ENCODE measurements at regions of chr7 and their contacts with region 1.

Region 1: DNA sequence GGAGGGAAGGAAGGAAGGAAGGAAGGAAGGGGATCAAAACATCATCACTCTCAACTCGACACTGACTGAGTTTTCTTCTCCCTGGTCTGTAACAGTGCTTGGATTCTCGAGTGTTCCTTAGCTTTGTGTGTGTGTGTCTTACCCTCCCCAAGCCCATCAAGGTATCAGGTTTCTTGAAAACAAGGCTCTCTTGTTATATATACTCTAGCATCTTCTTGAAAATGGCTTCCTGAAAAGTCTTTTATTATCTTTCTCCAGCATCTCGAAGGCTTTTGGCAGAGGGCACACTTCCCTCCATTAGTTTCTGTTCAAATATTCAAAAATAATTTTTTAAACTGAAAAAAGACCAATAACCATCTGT is 13.4 kb downstream of the SERPINE1 start:
- DNase-seq: no peak
- ATAC-seq: no peak
- H3K4me3 ChIP-seq: no peak overlapping the region
- H3K4me3 Mint-ChIP-seq: no peak overlapping the region
- H3K27ac ChIP-seq: no peak overlapping the region
- H3K27ac Mint-ChIP-seq: no peak overlapping the region
- H3K4me1 ChIP-seq: peaks cover 0 to 16% of the 10 kb centered on the region in 2 experiments
- H3K4me1 Mint-ChIP-seq: peaks cover 24 to 34% (median 28%) of the 10 kb centered on the region in 3 donors
- H3K27me3 ChIP-seq: peaks cover 3 to 41% of the 10 kb centered on the region in 2 experiments
- H3K27me3 Mint-ChIP-seq: peaks cover 8 to 38% of the 10 kb centered on the region in 2 donors

Region 2: GRCh38 chr7:100599911-100600729 is 540.2 kb before region 1 on chr7:
- CTCF ChIA-PET with region 1: no interaction called
- POLR2A ChIA-PET with region 1: no interaction called
- DNase-seq: no peak
- ATAC-seq: no peak
- H3K4me3 ChIP-seq: no peak overlapping the region
- H3K4me3 Mint-ChIP-seq: no peak overlapping the region
- H3K27ac ChIP-seq: no peak overlapping the region
- H3K27ac Mint-ChIP-seq: no peak overlapping the region
- H3K4me1 ChIP-seq: peaks cover 5 to 20% of the 10 kb centered on the region in 2 experiments
- H3K4me1 Mint-ChIP-seq: peaks cover 8 to 15% (median 11%) of the 10 kb centered on the region in 3 donors
- H3K27me3 ChIP-seq: peaks cover 0 to 5% of the 10 kb centered on the region in 2 experiments
- H3K27me3 Mint-ChIP-seq: no peaks in the 10 kb centered on the region

Region 3: DNA sequence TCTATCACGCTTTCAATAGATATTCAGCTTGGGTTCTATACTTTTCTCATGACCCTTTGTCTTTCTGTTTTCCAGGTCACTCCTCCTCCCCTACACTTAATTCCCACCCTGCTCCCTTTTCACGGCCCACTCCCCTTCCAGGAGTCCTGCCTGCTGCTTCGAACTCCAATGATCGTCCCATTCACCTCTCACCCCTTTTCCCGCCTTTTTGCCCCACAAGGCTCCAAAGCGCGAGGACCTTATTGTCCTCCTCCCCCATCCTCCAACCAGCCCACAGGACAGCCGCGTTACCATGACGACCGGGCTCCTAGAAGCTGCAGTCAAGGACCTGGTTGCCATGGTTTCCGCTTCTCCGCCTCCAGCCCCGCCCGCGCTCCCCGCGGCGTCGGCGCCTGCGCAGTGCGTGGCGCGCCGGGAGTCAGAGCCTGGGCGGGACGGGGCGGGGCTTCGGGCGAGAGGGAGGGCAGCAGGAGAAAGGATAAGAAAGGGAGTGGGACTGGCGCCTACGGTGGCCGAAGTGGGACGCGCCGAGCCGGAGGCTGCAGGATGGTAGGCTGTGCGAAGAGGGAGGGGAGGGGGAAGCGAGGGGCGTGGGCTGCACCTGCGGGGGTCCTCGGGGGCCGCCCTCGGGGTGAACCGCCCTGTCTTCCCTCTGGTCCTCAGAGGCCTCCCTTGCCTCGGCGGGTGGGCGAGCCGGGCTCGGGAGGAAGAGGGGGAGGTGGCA is 13.8 kb after region 1 on chr7 and contains the start of gene AP1S1:
- CTCF ChIA-PET with region 1: interaction called, 11 to 14 read pairs
- POLR2A ChIA-PET with region 1: no interaction called
- DNase-seq: peak; percentile 69 to 97 (median 84)
- ATAC-seq: peak; percentile 88 to 94 (median 90)
- H3K4me3 ChIP-seq: peak within 1 kb of the TSS; percentile 26 to 70
- H3K4me3 Mint-ChIP-seq: peak within 1 kb of the TSS; percentile 73 to 82 (median 77)
- H3K27ac ChIP-seq: no peak within 1 kb of the TSS
- H3K27ac Mint-ChIP-seq: peak within 1 kb of the TSS; percentile 27 to 41
- H3K4me1 ChIP-seq: peaks cover 0 to 20% of the 10 kb centered on the region in 2 experiments
- H3K4me1 Mint-ChIP-seq: peaks cover 12 to 17% (median 14%) of the 10 kb centered on the region in 3 donors
- H3K27me3 ChIP-seq: peaks cover 0 to 11% of the 10 kb centered on the region in 2 experiments
- H3K27me3 Mint-ChIP-seq: peaks cover 8 to 11% of the 10 kb centered on the region in 2 donors
- total RNA-seq, gene AP1S1: 8.1 to 16.7 (median 14.4) TPM

Region 4: DNA sequence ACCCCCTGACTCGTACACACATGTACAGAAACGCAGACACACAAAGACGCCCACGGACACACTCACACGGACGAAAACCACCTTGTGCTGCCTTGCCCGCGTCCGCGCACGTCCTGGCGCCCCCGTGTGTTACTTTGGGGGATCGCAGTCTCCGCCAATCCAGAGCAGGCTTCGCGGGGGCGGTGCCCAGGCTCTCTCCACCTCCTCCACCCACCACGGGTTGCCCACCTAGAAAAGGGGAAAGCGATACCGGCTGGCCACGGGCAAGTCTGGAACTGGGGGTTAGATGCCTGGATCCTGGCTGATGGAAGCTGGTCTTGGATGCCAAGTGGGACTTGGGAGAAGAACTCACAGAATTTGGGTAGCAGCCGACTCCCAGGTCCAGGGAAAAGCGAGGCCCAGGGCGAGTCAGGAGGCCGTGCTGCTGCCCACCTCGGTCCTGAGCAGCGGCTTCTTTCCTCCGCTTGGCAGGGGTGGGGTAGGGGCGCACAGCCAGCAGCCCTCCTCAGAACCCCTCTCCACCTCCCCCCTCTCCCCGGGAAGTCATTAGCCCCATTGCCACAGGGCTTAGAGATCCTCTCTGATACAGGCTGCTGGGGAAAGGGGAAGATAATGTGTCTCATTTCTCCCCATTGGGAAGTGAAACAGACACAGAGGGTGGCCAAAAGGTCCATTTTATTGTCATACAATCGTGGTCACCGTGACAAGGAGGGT is 29.7 kb after region 1 on chr7:
- CTCF ChIA-PET with region 1: interaction called, 6 to 27 read pairs
- POLR2A ChIA-PET with region 1: no interaction called
- DNase-seq: peak; percentile 43 to 87 (median 70)
- ATAC-seq: peak; percentile 49 to 65 (median 56)
- H3K4me3 ChIP-seq: peak overlapping the region in 1 of 2 donors; percentile 41
- H3K4me3 Mint-ChIP-seq: peak overlapping the region in 1 of 3 donors; percentile 74
- H3K27ac ChIP-seq: no peak overlapping the region
- H3K27ac Mint-ChIP-seq: no peak overlapping the region
- H3K4me1 ChIP-seq: peaks cover 36 to 80% of the 10 kb centered on the region in 2 experiments
- H3K4me1 Mint-ChIP-seq: peaks cover 72 to 85% (median 82%) of the 10 kb centered on the region in 3 donors
- H3K27me3 ChIP-seq: peaks cover 17 to 98% of the 10 kb centered on the region in 2 experiments
- H3K27me3 Mint-ChIP-seq: peaks cover 74 to 84% of the 10 kb centered on the region in 2 donors

Region 5: DNA sequence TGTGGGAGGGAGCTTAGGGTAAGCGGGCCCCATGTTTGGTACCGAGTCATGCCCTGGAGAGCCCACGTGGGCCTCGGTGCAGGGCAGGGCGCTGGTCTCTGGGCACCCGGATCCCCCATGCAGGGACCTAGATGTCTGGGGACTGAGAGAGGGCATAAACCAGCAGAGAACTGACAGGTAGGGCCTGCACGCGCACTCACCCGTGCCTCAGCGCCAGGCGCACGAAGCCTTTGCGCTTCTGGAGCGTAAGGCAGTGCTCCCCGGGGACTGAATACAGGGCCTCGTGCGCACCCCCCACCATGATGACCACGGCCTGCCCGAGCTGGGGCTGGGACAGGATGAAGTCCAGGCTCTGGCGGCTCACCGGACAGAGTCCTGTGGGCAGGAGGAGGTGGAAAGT is 57.7 kb after region 1 on chr7:
- CTCF ChIA-PET with region 1: interaction called, 11 to 43 read pairs
- POLR2A ChIA-PET with region 1: no interaction called
- DNase-seq: no peak
- ATAC-seq: no peak
- H3K4me3 ChIP-seq: no peak overlapping the region
- H3K4me3 Mint-ChIP-seq: no peak overlapping the region
- H3K27ac ChIP-seq: no peak overlapping the region
- H3K27ac Mint-ChIP-seq: no peak overlapping the region
- H3K4me1 ChIP-seq: peaks cover 0 to 18% of the 10 kb centered on the region in 2 experiments
- H3K4me1 Mint-ChIP-seq: peaks cover 6 to 18% (median 8%) of the 10 kb centered on the region in 3 donors
- H3K27me3 ChIP-seq: peaks cover 3 to 74% of the 10 kb centered on the region in 2 experiments
- H3K27me3 Mint-ChIP-seq: peaks cover 15 to 32% of the 10 kb centered on the region in 2 donors

Region 6: GRCh38 chr7:101217388-101218235 is 77.3 kb after region 1 on chr7 and contains the starts of genes PLOD3 and ZNHIT1:
- CTCF ChIA-PET with region 1: interaction called, 5 to 22 read pairs
- POLR2A ChIA-PET with region 1: interaction called in 1 of 2 experiments, 4 read pairs
- DNase-seq: peak; percentile 88 to 99 (median 94)
- ATAC-seq: peak; percentile 70 to 84 (median 74)
- H3K4me3 ChIP-seq: peak within 1 kb of the TSS; percentile 88 to 95
- H3K4me3 Mint-ChIP-seq: peak within 1 kb of the TSS; percentile 90 to 96 (median 95)
- H3K27ac ChIP-seq: peak within 1 kb of the TSS; percentile 77
- H3K27ac Mint-ChIP-seq: peak within 1 kb of the TSS; percentile 81 to 86
- H3K4me1 ChIP-seq: peaks cover 7 to 56% of the 10 kb centered on the region in 2 experiments
- H3K4me1 Mint-ChIP-seq: peaks cover 45 to 57% (median 51%) of the 10 kb centered on the region in 3 donors
- H3K27me3 ChIP-seq: no peaks in the 10 kb centered on the region
- H3K27me3 Mint-ChIP-seq: no peaks in the 10 kb centered on the region
- total RNA-seq, gene PLOD3: 27.7 to 74.2 (median 58.8) TPM
- total RNA-seq, gene ZNHIT1: 32.9 to 54.1 (median 50.4) TPM

Region 7: DNA sequence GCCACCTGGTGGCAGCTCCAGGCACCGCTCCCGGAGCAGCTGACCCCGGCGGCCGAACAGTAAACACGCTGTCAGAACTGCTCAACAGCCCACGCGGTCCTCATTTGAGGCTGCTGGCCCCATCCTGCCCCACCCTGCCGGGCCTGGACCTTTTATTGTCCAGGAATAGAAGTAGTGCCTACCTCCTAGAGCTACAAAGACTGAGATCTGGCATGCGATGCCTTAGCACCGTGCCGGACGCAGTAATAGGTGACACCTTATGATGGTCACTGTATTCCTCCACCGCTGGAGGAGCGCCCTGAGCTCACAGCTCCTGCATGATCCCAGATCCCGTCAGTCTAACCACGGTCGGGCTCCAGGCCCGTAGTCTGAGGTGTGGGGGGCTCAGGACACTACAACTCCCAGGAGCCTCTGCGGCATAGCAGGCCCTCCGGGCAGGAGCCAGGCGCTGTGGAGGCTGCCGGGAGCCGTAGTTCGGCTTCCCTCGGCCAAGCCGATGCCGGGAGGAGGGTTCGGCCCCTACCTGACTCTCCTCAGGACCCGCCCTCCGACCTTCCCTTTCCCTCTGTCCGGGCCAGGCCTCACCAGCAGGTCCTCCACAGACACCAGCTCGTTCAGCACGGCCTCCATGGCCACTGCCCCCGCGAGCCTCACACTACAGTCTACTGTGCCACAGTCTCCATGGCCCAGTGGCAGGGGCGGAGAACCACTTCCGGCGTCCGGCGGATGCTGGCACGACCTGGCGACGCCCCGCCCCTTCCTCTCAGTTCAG is 104.2 kb after region 1 on chr7 and contains the start of gene FIS1:
- CTCF ChIA-PET with region 1: interaction called, 9 to 10 read pairs
- POLR2A ChIA-PET with region 1: no interaction called
- DNase-seq: peak; percentile 81 to 96 (median 89)
- ATAC-seq: peak; percentile 95 to 98 (median 96)
- H3K4me3 ChIP-seq: peak within 1 kb of the TSS; percentile 81 to 97
- H3K4me3 Mint-ChIP-seq: peak within 1 kb of the TSS; percentile 91 to 98 (median 92)
- H3K27ac ChIP-seq: peak within 1 kb of the TSS; percentile 88
- H3K27ac Mint-ChIP-seq: peak within 1 kb of the TSS; percentile 98 to 99
- H3K4me1 ChIP-seq: peaks cover 6 to 33% of the 10 kb centered on the region in 2 experiments
- H3K4me1 Mint-ChIP-seq: peaks cover 35 to 41% (median 36%) of the 10 kb centered on the region in 3 donors
- H3K27me3 ChIP-seq: no peaks in the 10 kb centered on the region
- H3K27me3 Mint-ChIP-seq: no peaks in the 10 kb centered on the region
- total RNA-seq, gene FIS1: 99.3 to 136 (median 125) TPM

Region 8: GRCh38 chr7:101287032-101287431 is 146.7 kb after region 1 on chr7:
- CTCF ChIA-PET with region 1: interaction called, 15 to 44 read pairs
- POLR2A ChIA-PET with region 1: no interaction called
- DNase-seq: no peak
- ATAC-seq: no peak
- H3K4me3 ChIP-seq: no peak overlapping the region
- H3K4me3 Mint-ChIP-seq: no peak overlapping the region
- H3K27ac ChIP-seq: no peak overlapping the region
- H3K27ac Mint-ChIP-seq: no peak overlapping the region
- H3K4me1 ChIP-seq: peaks cover 0 to 15% of the 10 kb centered on the region in 2 experiments
- H3K4me1 Mint-ChIP-seq: peaks cover 11 to 21% (median 20%) of the 10 kb centered on the region in 3 donors
- H3K27me3 ChIP-seq: peaks cover 0 to 26% of the 10 kb centered on the region in 2 experiments
- H3K27me3 Mint-ChIP-seq: peaks cover 14 to 21% of the 10 kb centered on the region in 2 donors